ENCODE measurements at regions of chr17 and their contacts with region 1.

Region 1: DNA sequence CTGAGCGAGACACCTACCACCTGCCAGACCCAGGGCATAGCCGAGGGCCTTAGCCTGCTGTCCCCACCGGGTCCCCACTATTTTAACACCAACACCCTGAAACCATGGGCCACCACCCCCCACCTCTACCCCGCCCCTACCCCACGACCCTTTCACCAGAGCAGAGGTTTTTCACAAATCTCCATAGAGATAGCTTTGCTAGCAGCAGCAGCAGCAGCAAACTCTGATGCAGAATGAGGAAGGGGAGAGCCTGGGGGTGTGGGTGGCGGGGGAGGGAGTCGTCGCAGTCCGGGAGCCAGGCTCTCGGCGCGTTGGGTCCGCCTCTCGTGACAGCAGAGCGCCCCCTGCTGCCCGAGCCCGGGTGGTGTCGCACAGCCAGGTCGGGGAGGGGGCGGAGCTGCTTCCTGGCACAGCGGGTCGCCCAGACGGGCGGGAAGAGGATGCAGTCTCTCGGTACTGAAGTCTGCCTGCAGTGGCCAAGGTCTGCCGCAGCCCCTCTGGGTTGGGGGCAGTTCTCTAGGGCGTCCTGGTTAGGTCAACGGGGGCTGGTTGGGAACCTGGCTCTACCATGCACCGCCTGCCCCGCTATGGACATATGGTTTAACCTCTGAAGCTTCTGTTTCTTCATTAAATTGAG is 38.1 kb upstream of the CCDC182 start:
- DNase-seq: peak; percentile 66 to 84
- ATAC-seq: peak; percentile 89 to 96
- H3K4me3 ChIP-seq: peak overlapping the region; percentile 20; the same call in 1 of the 3 replicates
- H3K27ac ChIP-seq: peak overlapping the region; percentile 45 to 79; a peak in 4 of 6 replicates
- H3K4me1 ChIP-seq: 0 out of 3 replicates have a peak, but pooled peaks cover 5% of the 10 kb centered on the region
- CTCF ChIP-seq: peak; percentile 95
- EP300 ChIP-seq: no peak
- POLR2A ChIP-seq: no peak
- RAD21 ChIP-seq: peak; percentile 81 to 91

Region 2: GRCh38 chr17:57106107-57106835 is 677.0 kb before region 1 on chr17:
- CTCF ChIA-PET with region 1: interaction called, 11 read pairs
- POLR2A ChIA-PET with region 1: no interaction called
- DNase-seq: peak in 1 of 2 experiments; percentile 57
- ATAC-seq: peak; percentile 70 to 91
- H3K4me3 ChIP-seq: no peak overlapping the region
- H3K27ac ChIP-seq: peak overlapping the region in 1 of 2 experiments; percentile 63; a peak in 2 of 6 replicates
- H3K4me1 ChIP-seq: peaks cover 30% of the 10 kb centered on the region
- CTCF ChIP-seq: peak; percentile 52
- EP300 ChIP-seq: no peak
- POLR2A ChIP-seq: no peak
- RAD21 ChIP-seq: peak; percentile 25 to 33; a peak in 2 of 5 replicates

Region 3: DNA sequence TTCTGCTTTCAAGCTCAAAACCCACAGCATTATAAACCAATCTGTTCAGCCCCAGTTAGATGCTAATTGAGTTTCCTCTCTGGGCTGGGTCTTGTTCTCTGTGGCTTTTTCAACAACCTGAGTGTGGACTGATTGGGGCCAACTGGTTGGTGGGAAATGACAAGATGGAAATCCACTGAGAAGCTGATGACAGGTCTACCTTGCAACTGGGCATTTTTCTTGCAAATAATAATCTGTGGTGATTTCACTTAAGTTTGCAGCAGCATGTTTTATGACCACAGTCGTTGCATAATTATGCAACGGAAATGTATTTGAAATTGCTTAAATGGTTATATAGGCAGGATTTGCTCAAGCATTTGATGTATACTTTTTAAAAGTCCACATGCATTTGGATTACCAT is 628.3 kb before region 1 on chr17:
- CTCF ChIA-PET with region 1: interaction called, 10 read pairs
- POLR2A ChIA-PET with region 1: no interaction called
- DNase-seq: no peak
- ATAC-seq: no peak
- H3K4me3 ChIP-seq: no peak overlapping the region
- H3K27ac ChIP-seq: no peak overlapping the region
- H3K4me1 ChIP-seq: peaks cover 8% of the 10 kb centered on the region; the same call in 1 of the 3 replicates
- CTCF ChIP-seq: no peak
- EP300 ChIP-seq: no peak
- POLR2A ChIP-seq: no peak
- RAD21 ChIP-seq: no peak

Region 4: GRCh38 chr17:57739402-57740392 is 43.5 kb before region 1 on chr17:
- CTCF ChIA-PET with region 1: interaction called, 24 read pairs
- POLR2A ChIA-PET with region 1: no interaction called
- DNase-seq: peak; percentile 53 to 54
- ATAC-seq: peak; percentile 82 to 91
- H3K4me3 ChIP-seq: no peak overlapping the region
- H3K27ac ChIP-seq: no peak overlapping the region
- H3K4me1 ChIP-seq: peaks cover 6% of the 10 kb centered on the region; the same call in 1 of the 3 replicates
- CTCF ChIP-seq: peak; percentile 63
- EP300 ChIP-seq: no peak
- POLR2A ChIP-seq: no peak
- RAD21 ChIP-seq: peak; percentile 61 to 65

Region 5: GRCh38 chr17:57772774-57773173 is 10.4 kb before region 1 on chr17:
- CTCF ChIA-PET with region 1: interaction called, 124 read pairs
- POLR2A ChIA-PET with region 1: no interaction called
- DNase-seq: no peak
- ATAC-seq: peak in 1 of 2 experiments; percentile 62; a peak in 3 of 6 replicates
- H3K4me3 ChIP-seq: no peak overlapping the region
- H3K27ac ChIP-seq: no peak overlapping the region
- H3K4me1 ChIP-seq: 0 out of 3 replicates have a peak, but pooled peaks cover 4% of the 10 kb centered on the region
- CTCF ChIP-seq: no peak
- EP300 ChIP-seq: no peak
- POLR2A ChIP-seq: no peak
- RAD21 ChIP-seq: no peak

Region 6: GRCh38 chr17:57817299-57817698 is 34.1 kb after region 1 on chr17:
- CTCF ChIA-PET with region 1: interaction called, 25 read pairs
- POLR2A ChIA-PET with region 1: no interaction called
- DNase-seq: no peak
- ATAC-seq: no peak; a peak in 1 of 6 replicates
- H3K4me3 ChIP-seq: no peak overlapping the region
- H3K27ac ChIP-seq: no peak overlapping the region
- H3K4me1 ChIP-seq: no peaks in the 10 kb centered on the region
- CTCF ChIP-seq: no peak
- EP300 ChIP-seq: no peak
- POLR2A ChIP-seq: no peak
- RAD21 ChIP-seq: no peak

Measured in A549 (cell line).